Mammary epithelial cell (primary cell): ENCODE measurements at regions of chr3 and their contacts with region 1.

Region 1: DNA sequence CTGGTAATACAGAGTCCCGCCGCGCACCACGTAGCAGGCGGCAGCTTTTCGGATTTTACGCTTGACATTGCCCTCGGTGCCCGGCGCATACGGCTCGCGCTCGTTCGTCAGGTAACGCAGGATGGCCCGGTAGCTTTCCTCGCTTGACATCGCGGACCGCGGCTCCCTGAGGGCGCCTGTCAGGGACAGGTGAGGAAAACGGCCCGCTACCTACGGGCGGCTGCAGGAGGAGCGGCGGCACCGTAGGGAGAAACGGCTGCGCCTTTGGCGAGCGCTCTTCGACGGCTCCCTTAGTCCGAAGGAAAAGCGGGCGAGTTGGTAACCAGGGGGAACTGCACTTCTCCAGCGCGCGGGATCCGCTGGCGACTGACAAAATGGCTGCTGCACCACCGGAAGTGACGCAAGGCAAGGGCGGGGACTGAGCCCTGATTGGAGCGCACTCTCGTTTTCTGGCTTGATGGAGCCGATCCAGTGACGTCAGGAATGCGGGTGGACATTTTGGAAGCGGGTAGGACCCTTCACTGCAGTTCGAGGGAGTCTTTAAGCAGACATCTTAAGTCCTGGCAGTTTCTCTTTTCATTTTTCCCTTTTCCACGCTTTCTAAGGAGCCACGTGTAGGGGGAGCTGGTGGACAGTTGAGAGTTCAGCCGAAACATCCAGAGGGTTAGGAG is at the start of gene ZBTB11:
- DNase-seq: peak; percentile 99
- H3K4me3 ChIP-seq: peak within 1 kb of the TSS; percentile 65 to 87 (median 66)
- H3K27ac ChIP-seq: peak within 1 kb of the TSS; percentile 85
- H3K4me1 ChIP-seq: peaks cover 13% of the 10 kb centered on the region
- H3K27me3 ChIP-seq: no peaks in the 10 kb centered on the region
- CTCF ChIP-seq: peak; percentile 49 to 64
- total RNA-seq, gene ZBTB11: 20.3 to 25.3 TPM

Region 2: DNA sequence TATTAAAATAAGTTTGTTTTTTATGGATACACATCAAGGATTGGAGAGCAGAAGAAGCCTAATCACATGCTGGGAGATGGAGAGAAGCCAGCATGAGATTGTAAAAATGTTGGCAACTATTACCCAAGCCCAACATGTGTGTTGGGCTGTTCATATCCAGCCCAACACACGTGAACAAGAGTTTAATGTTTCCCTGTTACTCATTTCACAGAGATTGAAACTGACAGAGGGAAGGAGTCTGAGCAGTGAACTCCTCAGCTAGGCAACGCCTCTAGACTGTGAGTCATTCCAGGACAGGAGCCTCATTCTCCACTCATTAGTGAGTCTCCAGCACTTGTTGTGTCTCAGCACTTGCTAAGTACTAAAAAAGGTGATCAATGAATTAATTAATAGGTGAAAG is 1902.4 kb before region 1 on chr3:
- CTCF ChIA-PET with region 1: no interaction called
- dilution Hi-C with region 1: no loop called
- in situ Hi-C with region 1: no loop called
- intact Hi-C with region 1: no loop called
- DNase-seq: peak; percentile 93
- H3K4me3 ChIP-seq: no peak overlapping the region
- H3K27ac ChIP-seq: no peak overlapping the region
- H3K4me1 ChIP-seq: peaks cover 15% of the 10 kb centered on the region
- H3K27me3 ChIP-seq: no peaks in the 10 kb centered on the region
- CTCF ChIP-seq: no peak

Region 3: GRCh38 chr3:101512646-101513418 is 164.1 kb before region 1 on chr3 and contains the start of gene SENP7:
- CTCF ChIA-PET with region 1: no interaction called
- dilution Hi-C with region 1: no loop called
- in situ Hi-C with region 1: no loop called
- intact Hi-C with region 1: loop called (anchors 1 kb)
- DNase-seq: peak; percentile 83
- H3K4me3 ChIP-seq: peak within 1 kb of the TSS; percentile 68 to 94 (median 69)
- H3K27ac ChIP-seq: peak within 1 kb of the TSS; percentile 85
- H3K4me1 ChIP-seq: peaks cover 14% of the 10 kb centered on the region
- H3K27me3 ChIP-seq: no peaks in the 10 kb centered on the region
- CTCF ChIP-seq: no peak
- total RNA-seq, gene SENP7: 7.2 to 8.9 TPM